CD8-positive, alpha-beta T cell (primary cell): ENCODE measurements at regions of chr21 and their contacts with region 1.

Region 1: GRCh38 chr21:32597205-32597604 is 11.9 kb upstream of the TCP10L start:
- DNase-seq: no peak
- ATAC-seq: no peak
- H3K4me3 ChIP-seq: no peak overlapping the region
- H3K4me3 Mint-ChIP-seq: no peak overlapping the region
- H3K27ac ChIP-seq: no peak overlapping the region
- H3K27ac Mint-ChIP-seq: peak overlapping the region; percentile 24
- H3K4me1 ChIP-seq: no peaks in the 10 kb centered on the region
- H3K4me1 Mint-ChIP-seq: no peaks in the 10 kb centered on the region
- H3K27me3 ChIP-seq: no peaks in the 10 kb centered on the region
- H3K27me3 Mint-ChIP-seq: no peaks in the 10 kb centered on the region
- CTCF ChIP-seq: no peak

Region 2: DNA sequence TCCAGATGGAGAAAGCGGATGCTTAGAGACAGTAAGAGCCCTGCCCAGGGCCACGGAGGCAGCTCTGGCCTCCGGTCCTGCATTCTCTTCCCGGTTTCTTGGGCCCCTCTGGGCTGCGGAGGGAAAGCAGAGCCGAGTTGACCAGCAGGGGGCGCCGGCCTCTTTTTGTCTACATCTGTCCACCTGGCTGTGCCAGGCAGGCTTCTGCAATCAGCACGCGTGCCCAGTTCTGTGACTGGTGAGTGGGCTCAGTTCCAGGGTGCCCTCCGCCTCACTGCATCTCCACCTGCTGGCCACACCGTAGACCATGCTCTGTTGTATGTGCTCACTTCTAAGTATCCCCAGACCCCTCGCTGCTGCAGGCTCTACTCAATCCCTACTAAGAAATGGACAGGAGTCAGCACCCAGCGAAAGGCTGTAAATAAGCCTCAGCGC is 731.1 kb before region 1 on chr21:
- CTCF ChIA-PET with region 1: interaction called, 3 read pairs
- POLR2A ChIA-PET with region 1: no interaction called
- intact Hi-C with region 1: loop called in 1 of 2 experiments (anchors 1 kb)
- DNase-seq: peak; percentile 36 to 82 (median 66)
- ATAC-seq: peak; percentile 62
- H3K4me3 ChIP-seq: no peak overlapping the region
- H3K4me3 Mint-ChIP-seq: no peak overlapping the region
- H3K27ac ChIP-seq: no peak overlapping the region
- H3K27ac Mint-ChIP-seq: no peak overlapping the region
- H3K4me1 ChIP-seq: no peaks in the 10 kb centered on the region
- H3K4me1 Mint-ChIP-seq: no peaks in the 10 kb centered on the region
- H3K27me3 ChIP-seq: peaks cover 0 to 7% of the 10 kb centered on the region in 2 experiments
- H3K27me3 Mint-ChIP-seq: peaks cover 23% of the 10 kb centered on the region
- CTCF ChIP-seq: peak; percentile 76

Region 3: DNA sequence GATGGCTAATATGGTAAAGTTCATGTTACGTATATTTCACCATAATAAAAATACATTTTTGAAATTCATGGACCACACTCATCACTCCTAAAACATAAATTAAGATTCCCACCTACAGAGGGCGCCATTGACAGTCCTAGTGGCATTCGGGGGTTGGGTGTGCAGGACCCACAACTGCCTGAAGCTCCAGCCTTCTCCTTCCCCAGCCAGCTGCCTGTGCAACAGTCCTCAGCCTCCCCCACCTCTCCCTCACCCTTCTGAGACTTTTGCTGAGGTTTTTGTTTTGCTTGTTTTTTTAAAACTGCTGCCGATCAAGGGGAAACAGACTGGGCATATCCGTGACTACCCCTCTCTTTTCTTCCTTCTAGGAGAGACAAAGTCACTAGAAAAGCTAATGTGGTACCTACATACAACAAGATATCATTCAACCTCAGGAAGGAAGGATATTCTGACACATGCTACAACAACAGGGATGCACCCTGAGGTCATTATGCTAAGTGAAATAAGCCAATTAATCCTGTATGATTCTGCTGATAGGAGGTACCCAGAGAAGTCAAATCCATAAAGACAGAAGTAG is 193.9 kb before region 1 on chr21:
- CTCF ChIA-PET with region 1: interaction called, 105 read pairs
- POLR2A ChIA-PET with region 1: no interaction called
- intact Hi-C with region 1: loop called (anchors 1 kb)
- DNase-seq: peak; percentile 21 to 80 (median 58)
- ATAC-seq: peak; percentile 81
- H3K4me3 ChIP-seq: no peak overlapping the region
- H3K4me3 Mint-ChIP-seq: no peak overlapping the region
- H3K27ac ChIP-seq: no peak overlapping the region
- H3K27ac Mint-ChIP-seq: no peak overlapping the region
- H3K4me1 ChIP-seq: peaks cover 6% of the 10 kb centered on the region
- H3K4me1 Mint-ChIP-seq: peaks cover 15% of the 10 kb centered on the region
- H3K27me3 ChIP-seq: no peaks in the 10 kb centered on the region
- H3K27me3 Mint-ChIP-seq: peaks cover 4% of the 10 kb centered on the region
- CTCF ChIP-seq: peak; percentile 65

Region 4: GRCh38 chr21:32560896-32561295 is 36.3 kb before region 1 on chr21:
- CTCF ChIA-PET with region 1: interaction called, 10 read pairs
- POLR2A ChIA-PET with region 1: no interaction called
- intact Hi-C with region 1: no loop called
- DNase-seq: no peak
- ATAC-seq: no peak
- H3K4me3 ChIP-seq: no peak overlapping the region
- H3K4me3 Mint-ChIP-seq: no peak overlapping the region
- H3K27ac ChIP-seq: no peak overlapping the region
- H3K27ac Mint-ChIP-seq: no peak overlapping the region
- H3K4me1 ChIP-seq: no peaks in the 10 kb centered on the region
- H3K4me1 Mint-ChIP-seq: peaks cover 15% of the 10 kb centered on the region
- H3K27me3 ChIP-seq: no peaks in the 10 kb centered on the region
- H3K27me3 Mint-ChIP-seq: no peaks in the 10 kb centered on the region
- CTCF ChIP-seq: no peak

Region 5: GRCh38 chr21:32587120-32587519 is 10.1 kb before region 1 on chr21:
- CTCF ChIA-PET with region 1: interaction called, 25 read pairs
- POLR2A ChIA-PET with region 1: no interaction called
- intact Hi-C with region 1: no loop called
- DNase-seq: no peak
- ATAC-seq: no peak
- H3K4me3 ChIP-seq: no peak overlapping the region
- H3K4me3 Mint-ChIP-seq: no peak overlapping the region
- H3K27ac ChIP-seq: no peak overlapping the region
- H3K27ac Mint-ChIP-seq: no peak overlapping the region
- H3K4me1 ChIP-seq: no peaks in the 10 kb centered on the region
- H3K4me1 Mint-ChIP-seq: no peaks in the 10 kb centered on the region
- H3K27me3 ChIP-seq: peaks cover 0 to 4% of the 10 kb centered on the region in 2 experiments
- H3K27me3 Mint-ChIP-seq: no peaks in the 10 kb centered on the region
- CTCF ChIP-seq: no peak

Region 6: DNA sequence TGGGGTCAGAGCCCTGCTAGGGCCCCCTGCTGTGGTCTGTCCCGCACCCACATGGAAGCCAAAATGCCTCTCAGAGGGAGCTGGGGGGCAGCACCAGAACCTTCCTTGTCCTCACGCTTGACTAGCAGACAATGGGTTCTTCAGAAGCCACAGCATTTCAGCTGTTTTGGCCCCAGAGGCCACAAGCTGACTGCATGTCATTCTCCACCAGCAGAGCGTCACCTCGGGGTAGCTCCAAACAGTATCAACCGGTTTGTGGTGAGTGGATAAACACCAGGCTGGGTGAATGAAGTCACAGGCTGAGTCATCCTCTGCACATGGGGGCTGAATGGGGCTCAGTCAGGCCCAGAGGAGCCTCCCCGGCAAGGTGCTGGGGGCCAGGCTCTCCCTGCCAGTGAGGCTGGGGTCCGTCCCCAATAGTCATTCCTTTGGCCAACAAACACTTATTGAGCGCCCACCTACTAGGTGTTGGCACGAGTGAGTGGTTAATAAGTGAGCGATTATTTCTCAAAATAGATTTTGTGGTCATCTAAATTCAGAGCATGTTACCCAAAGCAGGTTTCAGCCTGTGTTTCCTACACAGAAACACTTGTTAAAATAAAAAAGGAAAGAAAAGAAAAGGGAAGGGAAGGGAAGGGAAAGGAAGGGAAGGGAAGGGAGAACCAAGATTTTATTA is 481.8 kb after region 1 on chr21:
- CTCF ChIA-PET with region 1: no interaction called
- POLR2A ChIA-PET with region 1: no interaction called
- intact Hi-C with region 1: no loop called
- DNase-seq: peak in 6 of 9 experiments; percentile 9 to 58 (median 44)
- ATAC-seq: peak; percentile 80
- H3K4me3 ChIP-seq: no peak overlapping the region
- H3K4me3 Mint-ChIP-seq: no peak overlapping the region
- H3K27ac ChIP-seq: no peak overlapping the region
- H3K27ac Mint-ChIP-seq: no peak overlapping the region
- H3K4me1 ChIP-seq: no peaks in the 10 kb centered on the region
- H3K4me1 Mint-ChIP-seq: peaks cover 6% of the 10 kb centered on the region
- H3K27me3 ChIP-seq: no peaks in the 10 kb centered on the region
- H3K27me3 Mint-ChIP-seq: peaks cover 12% of the 10 kb centered on the region
- CTCF ChIP-seq: no peak